Activated CD4-positive, alpha-beta T cell treated with anti-CD3 and anti-CD28 coated beads, Interleukin-2, amount 10 ng/mL, durations not matched to agents 24 days and 14 days (primary cell): ENCODE measurements at regions of chr18 and their contacts with region 1.

Region 1: DNA sequence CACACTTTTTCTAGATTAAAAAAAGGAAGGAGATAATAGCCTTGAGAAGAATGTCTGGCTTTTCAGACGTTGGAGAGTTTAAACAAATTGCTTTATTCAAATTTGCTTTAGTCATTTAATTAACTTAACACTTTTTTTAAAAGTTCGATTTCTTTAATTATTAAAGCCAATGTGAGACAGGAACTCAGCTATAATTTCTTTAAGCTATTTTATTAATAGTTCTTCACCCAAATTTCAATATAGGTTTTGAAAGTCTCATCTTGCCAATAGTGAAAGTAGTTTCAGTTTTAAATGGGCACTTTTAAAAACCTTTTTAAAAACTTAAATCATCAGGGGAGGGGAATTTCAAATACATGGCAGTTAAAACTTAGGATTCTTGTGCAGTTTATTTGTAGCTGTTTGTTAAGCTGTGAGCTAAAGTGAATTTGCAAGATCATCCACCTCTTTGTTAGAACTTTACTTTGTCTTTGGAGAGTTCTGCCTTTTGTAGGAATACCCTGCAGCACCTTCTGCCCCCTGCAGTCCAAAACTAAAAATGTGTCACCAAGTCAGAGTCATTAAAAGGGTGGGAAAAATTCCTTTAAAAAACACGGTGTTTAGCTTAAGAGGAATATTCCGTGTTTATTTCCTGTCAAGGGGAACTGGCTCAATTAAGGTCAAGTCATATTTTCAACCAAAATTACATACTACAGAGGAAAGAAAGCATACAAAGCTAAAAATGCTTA is 4.6 kb downstream of the TGIF1 start:
- DNase-seq: peak; percentile 84
- H3K4me3 Mint-ChIP-seq: peak overlapping the region; percentile 96
- H3K27ac Mint-ChIP-seq: peak overlapping the region; percentile 100
- H3K4me1 Mint-ChIP-seq: peaks cover 66% of the 10 kb centered on the region
- H3K27me3 Mint-ChIP-seq: no peaks in the 10 kb centered on the region

Region 2: GRCh38 chr18:3305354-3305762 is 149.2 kb before region 1 on chr18:
- intact Hi-C with region 1: loop called (anchors 1 kb)
- DNase-seq: peak; percentile 85
- H3K4me3 Mint-ChIP-seq: peak overlapping the region; percentile 60
- H3K27ac Mint-ChIP-seq: peak overlapping the region; percentile 92
- H3K4me1 Mint-ChIP-seq: peaks cover 19% of the 10 kb centered on the region
- H3K27me3 Mint-ChIP-seq: peaks cover 22% of the 10 kb centered on the region

Region 3: GRCh38 chr18:3422905-3423304 is 31.6 kb before region 1 on chr18:
- intact Hi-C with region 1: no loop called
- DNase-seq: no peak
- H3K4me3 Mint-ChIP-seq: no peak overlapping the region
- H3K27ac Mint-ChIP-seq: no peak overlapping the region
- H3K4me1 Mint-ChIP-seq: no peaks in the 10 kb centered on the region
- H3K27me3 Mint-ChIP-seq: no peaks in the 10 kb centered on the region

Region 4: GRCh38 chr18:3441290-3441689 is 13.2 kb before region 1 on chr18:
- intact Hi-C with region 1: no loop called
- DNase-seq: peak; percentile 58
- H3K4me3 Mint-ChIP-seq: no peak overlapping the region
- H3K27ac Mint-ChIP-seq: no peak overlapping the region
- H3K4me1 Mint-ChIP-seq: peaks cover 5% of the 10 kb centered on the region
- H3K27me3 Mint-ChIP-seq: peaks cover 21% of the 10 kb centered on the region

Region 5: DNA sequence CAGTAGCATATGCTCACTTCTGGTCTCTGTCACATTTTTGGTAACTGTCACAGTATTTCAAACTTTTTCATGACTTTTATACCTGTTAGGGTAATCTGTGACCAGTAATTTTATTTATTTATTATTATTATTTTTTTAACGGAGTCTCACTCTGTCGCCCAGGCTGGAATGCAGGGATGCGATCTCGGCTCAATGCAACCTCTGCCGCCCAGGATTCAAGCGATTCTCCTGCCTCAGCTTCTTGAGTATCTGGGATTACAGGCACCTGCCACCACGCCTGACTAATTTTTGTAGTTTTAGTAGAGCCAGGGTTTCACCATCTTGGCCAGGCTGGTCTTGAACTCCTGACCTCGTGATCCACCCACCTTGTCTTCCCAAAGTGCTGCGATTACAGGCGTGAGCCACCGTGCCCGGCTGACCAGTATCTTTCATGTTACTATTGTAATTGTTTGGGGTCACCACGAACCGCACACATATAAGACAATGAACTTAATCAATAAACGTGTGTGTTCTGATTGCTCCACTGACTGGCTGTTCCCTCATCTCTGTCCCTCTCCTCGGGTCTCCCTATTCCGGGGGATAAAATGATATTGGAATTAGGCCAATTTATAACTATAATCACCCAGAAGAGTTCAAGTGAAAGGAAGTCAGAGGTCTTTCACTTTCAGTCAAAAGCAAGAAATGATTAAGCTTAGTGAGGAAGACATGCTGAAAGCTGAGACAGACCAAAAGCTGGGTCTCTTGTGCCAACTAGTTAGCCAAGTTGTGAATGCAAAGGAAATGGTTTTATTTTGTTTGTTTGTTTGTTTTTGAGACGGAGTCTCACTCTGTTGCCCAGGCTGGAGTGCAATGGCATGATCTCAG is 18.4 kb after region 1 on chr18:
- intact Hi-C with region 1: loop called (anchors 2 kb)
- DNase-seq: peak; percentile 62
- H3K4me3 Mint-ChIP-seq: no peak overlapping the region
- H3K27ac Mint-ChIP-seq: no peak overlapping the region
- H3K4me1 Mint-ChIP-seq: peaks cover 9% of the 10 kb centered on the region
- H3K27me3 Mint-ChIP-seq: no peaks in the 10 kb centered on the region

Region 6: GRCh38 chr18:3541549-3542386 is 87.2 kb after region 1 on chr18:
- intact Hi-C with region 1: loop called (anchors 1 kb)
- DNase-seq: no peak
- H3K4me3 Mint-ChIP-seq: no peak overlapping the region
- H3K27ac Mint-ChIP-seq: peak overlapping the region; percentile 75
- H3K4me1 Mint-ChIP-seq: peaks cover 14% of the 10 kb centered on the region
- H3K27me3 Mint-ChIP-seq: peaks cover 6% of the 10 kb centered on the region

Region 7: DNA sequence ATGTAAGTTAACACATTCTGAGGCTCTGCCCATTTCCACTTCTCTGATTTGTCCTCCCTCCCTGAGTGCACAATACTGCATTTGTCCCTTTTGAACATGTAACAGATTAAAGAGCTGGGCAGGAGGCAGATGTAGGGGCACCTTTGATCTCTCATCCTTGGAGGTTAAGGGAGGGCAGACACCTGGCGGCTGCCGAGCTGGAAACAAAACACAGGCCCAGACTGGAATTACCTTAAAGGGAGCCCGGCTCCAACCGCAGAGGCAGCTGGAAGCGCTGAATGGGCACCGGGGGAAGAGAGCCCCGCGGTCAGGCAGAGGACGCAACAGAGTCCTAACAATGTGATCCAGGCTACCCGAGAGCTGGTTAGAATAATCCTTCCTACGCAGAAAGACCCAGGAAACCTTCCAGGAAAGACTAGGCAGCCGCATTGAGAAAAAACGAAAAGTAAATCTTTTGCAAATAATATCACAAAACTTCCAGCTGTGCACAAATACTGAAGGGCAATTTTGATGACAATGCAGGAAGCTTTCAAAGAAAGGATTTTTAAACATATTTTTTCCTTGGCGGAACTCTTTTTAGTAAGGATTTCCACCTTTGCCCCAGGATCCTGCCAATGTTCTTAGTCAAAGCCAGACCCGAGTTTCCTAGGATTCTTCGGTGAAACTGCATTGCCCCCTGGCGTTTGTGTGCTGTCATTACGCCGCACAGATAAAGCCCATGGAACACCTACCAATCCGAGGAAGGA is 211.4 kb after region 1 on chr18:
- intact Hi-C with region 1: loop called (anchors 1 kb)
- DNase-seq: peak; percentile 92
- H3K4me3 Mint-ChIP-seq: peak overlapping the region; percentile 61
- H3K27ac Mint-ChIP-seq: peak overlapping the region; percentile 53
- H3K4me1 Mint-ChIP-seq: peaks cover 33% of the 10 kb centered on the region
- H3K27me3 Mint-ChIP-seq: peaks cover 9% of the 10 kb centered on the region